Naive thymus-derived CD8-positive, alpha-beta T cell (primary cell): ENCODE measurements at regions of chr17 and their contacts with region 1.

Region 1: GRCh38 chr17:29722411-29723198 is 99.9 kb upstream of the CORO6 start:
- DNase-seq: peak in 9 of 10 donors; percentile 35 to 77 (median 57)
- ATAC-seq: peak; percentile 79 to 83
- H3K4me3 Mint-ChIP-seq: peak overlapping the region; percentile 53 to 90 (median 76)
- H3K27ac Mint-ChIP-seq: peak overlapping the region; percentile 86 to 99 (median 94)
- H3K4me1 Mint-ChIP-seq: peaks cover 50 to 95% (median 86%) of the 10 kb centered on the region in 4 donors
- H3K27me3 Mint-ChIP-seq: no peaks in the 10 kb centered on the region

Region 2: DNA sequence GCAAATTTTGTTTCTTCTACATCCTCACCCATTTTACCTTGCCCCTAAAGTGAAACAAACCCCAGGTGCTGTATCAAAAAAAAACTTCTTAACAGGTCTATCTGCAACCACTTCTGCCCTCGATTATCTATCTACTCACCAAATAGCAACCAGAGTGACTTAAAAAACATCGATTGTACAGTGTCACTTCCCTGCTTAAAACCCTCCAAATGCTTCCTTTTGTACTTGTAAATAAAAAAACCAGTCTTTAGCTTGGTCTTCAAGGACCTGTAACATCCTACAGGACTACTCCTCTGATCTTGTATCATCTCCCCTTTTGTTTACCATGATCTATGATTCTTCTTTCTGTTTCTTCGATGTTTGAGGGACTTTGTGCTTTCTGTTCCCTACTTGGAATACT is 17.2 kb before region 1 on chr17:
- POLR2A ChIA-PET with region 1: interaction called, 80 read pairs
- DNase-seq: peak in 2 of 10 donors; percentile 32 to 43
- ATAC-seq: peak in 1 of 2 donors; percentile 31
- H3K4me3 Mint-ChIP-seq: peak overlapping the region; percentile 48 to 89 (median 74)
- H3K27ac Mint-ChIP-seq: peak overlapping the region; percentile 88 to 99 (median 98)
- H3K4me1 Mint-ChIP-seq: peaks cover 13 to 71% (median 49%) of the 10 kb centered on the region in 4 donors
- H3K27me3 Mint-ChIP-seq: no peaks in the 10 kb centered on the region

Region 3: GRCh38 chr17:29710891-29711418 is 11.7 kb before region 1 on chr17:
- POLR2A ChIA-PET with region 1: interaction called, 80 read pairs
- DNase-seq: no peak
- ATAC-seq: no peak
- H3K4me3 Mint-ChIP-seq: no peak overlapping the region
- H3K27ac Mint-ChIP-seq: peak overlapping the region; percentile 35 to 99 (median 82)
- H3K4me1 Mint-ChIP-seq: peaks cover 23 to 91% (median 77%) of the 10 kb centered on the region in 4 donors
- H3K27me3 Mint-ChIP-seq: no peaks in the 10 kb centered on the region

Region 4: GRCh38 chr17:29732613-29733012 is 10.0 kb after region 1 on chr17:
- POLR2A ChIA-PET with region 1: interaction called, 12 read pairs
- DNase-seq: no peak
- ATAC-seq: no peak
- H3K4me3 Mint-ChIP-seq: peak overlapping the region in 2 of 10 donors; percentile 11 to 15
- H3K27ac Mint-ChIP-seq: peak overlapping the region in 8 of 10 donors; percentile 29 to 99 (median 70)
- H3K4me1 Mint-ChIP-seq: peaks cover 29 to 75% (median 61%) of the 10 kb centered on the region in 4 donors
- H3K27me3 Mint-ChIP-seq: no peaks in the 10 kb centered on the region

Region 5: DNA sequence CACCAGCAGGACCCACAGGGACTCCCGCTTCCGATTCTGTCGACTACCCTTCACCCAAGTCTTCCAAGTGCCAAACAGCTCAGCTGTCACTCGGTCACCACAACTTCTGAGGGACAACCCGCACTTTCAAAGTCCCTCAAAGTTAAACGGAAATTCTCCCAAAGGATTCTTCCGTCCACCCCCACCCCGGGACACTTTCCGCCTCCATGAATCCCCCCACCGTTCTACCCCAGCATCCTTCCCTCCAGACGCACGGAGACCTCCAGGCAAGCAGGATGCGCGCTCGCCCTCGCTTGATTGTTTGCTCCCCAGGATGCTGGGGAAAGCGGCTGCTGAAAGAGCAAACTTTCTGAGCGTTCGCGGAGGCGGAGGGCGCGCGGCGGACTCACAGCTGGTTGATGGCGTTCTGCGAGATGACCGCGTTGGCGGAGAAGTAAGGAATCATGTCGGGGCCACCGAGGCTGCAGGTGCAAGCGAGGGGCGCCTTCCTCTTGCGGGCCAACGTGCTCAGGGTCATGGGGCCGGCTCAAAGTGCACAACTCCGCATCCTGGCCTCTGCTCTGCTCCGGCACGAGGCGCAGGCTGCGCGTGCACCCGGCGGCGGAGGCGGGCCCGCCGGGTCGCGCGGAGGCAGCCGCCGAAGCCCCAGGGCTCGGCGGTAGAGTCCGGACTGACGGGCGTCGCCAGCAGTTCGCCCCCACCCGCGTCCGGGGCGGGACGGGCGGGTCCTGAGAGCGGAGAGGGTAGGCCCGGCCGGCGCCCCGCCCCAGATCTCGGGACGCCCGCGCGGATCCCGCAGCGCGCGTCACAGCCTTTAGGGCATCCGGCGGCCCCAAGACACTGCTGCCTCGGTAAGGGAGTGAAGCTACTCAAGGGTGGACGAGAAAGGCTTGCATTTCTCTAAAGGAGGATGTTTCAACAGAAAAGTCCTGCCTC is 38.4 kb after region 1 on chr17:
- POLR2A ChIA-PET with region 1: interaction called, 54 read pairs
- DNase-seq: peak; percentile 85 to 95 (median 92)
- ATAC-seq: peak; percentile 78 to 87
- H3K4me3 Mint-ChIP-seq: peak overlapping the region; percentile 91 to 100 (median 97)
- H3K27ac Mint-ChIP-seq: peak overlapping the region; percentile 91 to 100 (median 96)
- H3K4me1 Mint-ChIP-seq: peaks cover 9 to 48% (median 40%) of the 10 kb centered on the region in 4 donors
- H3K27me3 Mint-ChIP-seq: no peaks in the 10 kb centered on the region